Activated CD8-positive, alpha-beta memory T cell treated with anti-CD3 and anti-CD28 coated beads, Interleukin-2, amount 10 ng/mL, durations not matched to agents 7 days and 5 days (primary cell): ENCODE measurements at regions of chr3 and their contacts with region 1.

Region 1: GRCh38 chr3:129003578-129004160 is 2.6 kb downstream of the EFCC1 start:
- DNase-seq: peak; percentile 53
- ATAC-seq: peak; percentile 75
- H3K4me3 Mint-ChIP-seq: no peak overlapping the region
- H3K27ac Mint-ChIP-seq: no peak overlapping the region
- H3K4me1 Mint-ChIP-seq: peaks cover 33% of the 10 kb centered on the region
- H3K27me3 Mint-ChIP-seq: peaks cover 48% of the 10 kb centered on the region

Region 2: DNA sequence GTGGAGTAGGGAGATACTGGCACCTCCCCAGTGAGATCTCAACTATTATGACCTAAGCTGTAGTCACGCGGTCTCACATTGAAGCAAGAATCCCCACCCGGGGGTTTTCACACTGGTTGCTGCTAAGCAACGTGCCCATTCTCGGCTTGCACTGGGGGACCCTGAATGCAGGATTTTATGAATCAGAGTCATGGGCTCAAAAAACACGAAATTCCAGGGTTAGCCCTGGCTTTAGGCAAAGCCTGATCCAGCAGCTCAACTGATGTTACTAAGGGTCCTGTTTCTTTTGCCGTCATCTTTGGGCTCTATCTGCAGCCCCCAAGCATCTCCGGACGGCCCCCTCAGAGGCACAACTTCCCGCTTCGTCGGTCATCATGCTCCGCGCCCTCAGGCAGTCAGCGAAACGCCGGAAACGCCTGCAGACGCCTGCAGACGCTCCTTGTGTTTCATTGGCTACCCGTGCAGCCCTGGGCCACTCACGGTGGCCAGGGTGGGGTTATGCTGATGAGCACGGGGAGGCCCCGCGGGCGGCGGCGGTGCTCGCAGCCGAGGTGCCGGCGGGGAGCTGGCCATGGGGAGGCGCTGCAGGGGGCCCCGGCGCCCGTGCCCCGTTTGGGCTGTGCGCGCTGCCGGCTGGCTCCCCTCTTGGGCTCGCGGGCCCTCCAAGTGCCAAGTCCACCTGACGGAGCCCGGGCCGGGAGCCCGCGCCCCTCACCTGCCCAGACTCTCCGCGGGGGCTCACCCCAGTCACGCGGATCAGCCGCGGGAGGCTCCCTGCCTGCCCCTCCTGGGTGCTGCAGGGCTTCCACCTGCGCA is 23.3 kb after region 1 on chr3:
- CTCF ChIA-PET with region 1: interaction called, 20 read pairs
- DNase-seq: peak; percentile 97
- ATAC-seq: peak; percentile 100
- H3K4me3 Mint-ChIP-seq: peak overlapping the region; percentile 80
- H3K27ac Mint-ChIP-seq: peak overlapping the region; percentile 96
- H3K4me1 Mint-ChIP-seq: peaks cover 24% of the 10 kb centered on the region
- H3K27me3 Mint-ChIP-seq: peaks cover 6% of the 10 kb centered on the region

Region 3: GRCh38 chr3:129132097-129132866 is 128.6 kb after region 1 on chr3:
- CTCF ChIA-PET with region 1: no interaction called
- DNase-seq: no peak
- ATAC-seq: no peak
- H3K4me3 Mint-ChIP-seq: no peak overlapping the region
- H3K27ac Mint-ChIP-seq: peak overlapping the region; percentile 18
- H3K4me1 Mint-ChIP-seq: no peaks in the 10 kb centered on the region
- H3K27me3 Mint-ChIP-seq: no peaks in the 10 kb centered on the region

Region 4: GRCh38 chr3:129633751-129634392 is 630.2 kb after region 1 on chr3:
- CTCF ChIA-PET with region 1: no interaction called
- DNase-seq: no peak
- ATAC-seq: no peak
- H3K4me3 Mint-ChIP-seq: no peak overlapping the region
- H3K27ac Mint-ChIP-seq: no peak overlapping the region
- H3K4me1 Mint-ChIP-seq: no peaks in the 10 kb centered on the region
- H3K27me3 Mint-ChIP-seq: peaks cover 13% of the 10 kb centered on the region